HepG2 (cell line): ENCODE measurements at regions of chr7 and their contacts with region 1.

Region 1: GRCh38 chr7:73342645-73343044 is 14.7 kb downstream of the FKBP6 start:
- DNase-seq: peak; percentile 73
- ATAC-seq: peak; percentile 79
- H3K4me3 ChIP-seq: peak overlapping the region; percentile 11 to 67 (median 43); a peak in 4 of 6 replicates
- H3K27ac ChIP-seq: no peak overlapping the region
- H3K4me1 ChIP-seq: peaks cover 62% of the 10 kb centered on the region
- H3K27me3 ChIP-seq: peaks cover 0 to 5% of the 10 kb centered on the region in 2 experiments; a peak in 1 of 5 replicates
- CTCF ChIP-seq: peak; percentile 90
- EP300 ChIP-seq: no peak
- POLR2A ChIP-seq: no peak
- RAD21 ChIP-seq: peak; percentile 69

Region 2: GRCh38 chr7:73329861-73330581 is 12.6 kb before region 1 on chr7:
- CTCF ChIA-PET with region 1: interaction called, 3 read pairs
- POLR2A ChIA-PET with region 1: interaction called, 7 read pairs
- in situ Hi-C with region 1: no loop called
- intact Hi-C with region 1: loop called (anchors 2 kb)
- DNase-seq: no peak
- ATAC-seq: peak; percentile 30
- H3K4me3 ChIP-seq: peak overlapping the region in 2 of 3 experiments; percentile 5 to 29; a peak in 3 of 6 replicates
- H3K27ac ChIP-seq: no peak overlapping the region
- H3K4me1 ChIP-seq: peaks cover 53% of the 10 kb centered on the region
- H3K27me3 ChIP-seq: peaks cover 2 to 23% of the 10 kb centered on the region in 2 experiments; a peak in 2 of 5 replicates
- CTCF ChIP-seq: no peak
- EP300 ChIP-seq: no peak
- POLR2A ChIP-seq: no peak
- RAD21 ChIP-seq: no peak

Region 3: GRCh38 chr7:73358590-73359275 is 16.1 kb after region 1 on chr7:
- CTCF ChIA-PET with region 1: no interaction called
- POLR2A ChIA-PET with region 1: interaction called, 28 read pairs
- in situ Hi-C with region 1: no loop called
- intact Hi-C with region 1: loop called (anchors 2 kb)
- DNase-seq: no peak
- ATAC-seq: peak; percentile 28
- H3K4me3 ChIP-seq: peak overlapping the region in 2 of 3 experiments; percentile 44 to 63; a peak in 4 of 6 replicates
- H3K27ac ChIP-seq: peak overlapping the region; percentile 78
- H3K4me1 ChIP-seq: peaks cover 73% of the 10 kb centered on the region
- H3K27me3 ChIP-seq: peaks cover 8 to 26% of the 10 kb centered on the region in 2 experiments
- CTCF ChIP-seq: no peak
- EP300 ChIP-seq: no peak
- POLR2A ChIP-seq: no peak
- RAD21 ChIP-seq: no peak

Region 4: GRCh38 chr7:73366127-73366526 is 23.5 kb after region 1 on chr7:
- CTCF ChIA-PET with region 1: no interaction called
- POLR2A ChIA-PET with region 1: interaction called, 3 read pairs
- in situ Hi-C with region 1: no loop called
- intact Hi-C with region 1: loop called (anchors 1 kb)
- DNase-seq: no peak
- ATAC-seq: no peak
- H3K4me3 ChIP-seq: no peak overlapping the region
- H3K27ac ChIP-seq: no peak overlapping the region
- H3K4me1 ChIP-seq: peaks cover 58% of the 10 kb centered on the region
- H3K27me3 ChIP-seq: peaks cover 10 to 34% of the 10 kb centered on the region in 2 experiments
- CTCF ChIP-seq: no peak
- EP300 ChIP-seq: no peak
- POLR2A ChIP-seq: no peak
- RAD21 ChIP-seq: no peak

Region 5: DNA sequence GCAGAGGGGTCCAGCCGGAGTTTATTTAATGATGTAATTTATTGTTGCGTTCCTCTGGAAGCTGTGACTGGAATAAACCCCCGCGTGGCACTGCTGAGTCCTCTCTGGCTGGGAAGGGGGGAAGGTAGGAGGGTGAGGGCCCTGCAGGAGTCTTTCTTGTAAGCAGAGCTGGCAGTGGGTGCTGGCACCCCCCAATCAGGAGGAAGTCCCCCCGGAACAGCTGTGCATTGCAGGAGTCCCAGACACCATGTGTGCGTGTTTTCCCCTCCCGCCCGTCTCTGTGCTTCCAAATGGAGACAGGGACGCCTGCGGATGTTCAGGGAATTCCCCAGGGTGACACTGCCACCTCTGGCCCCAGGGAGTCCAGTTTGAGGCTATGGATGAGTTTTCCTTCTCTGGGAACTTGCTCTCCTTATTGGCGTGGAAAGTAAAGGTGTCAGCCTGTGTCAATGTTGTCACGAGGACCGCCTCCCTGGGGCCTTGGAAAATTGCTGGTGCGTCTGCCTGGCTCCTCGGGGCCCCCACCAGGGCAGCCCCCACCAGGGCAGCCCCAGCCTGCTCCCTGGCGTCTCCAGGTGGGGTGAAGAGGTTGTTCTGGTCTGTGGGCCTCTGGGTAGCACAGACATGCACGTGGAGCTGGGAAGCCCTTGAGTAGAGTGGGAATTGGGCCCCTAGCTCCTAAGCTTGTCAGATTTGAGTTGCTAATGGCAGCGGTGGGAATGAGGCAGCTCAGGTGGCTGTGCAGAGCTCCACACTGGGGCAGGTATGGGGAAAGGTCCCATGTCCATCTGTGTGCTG is 93.6 kb after region 1 on chr7:
- CTCF ChIA-PET with region 1: no interaction called
- POLR2A ChIA-PET with region 1: interaction called, 3 read pairs
- in situ Hi-C with region 1: loop called (anchors 5 kb)
- intact Hi-C with region 1: loop called (anchors 1 kb)
- DNase-seq: peak; percentile 54
- ATAC-seq: peak; percentile 71
- H3K4me3 ChIP-seq: peak overlapping the region in 2 of 3 experiments; percentile 5 to 49; a peak in 1 of 6 replicates
- H3K27ac ChIP-seq: no peak overlapping the region
- H3K4me1 ChIP-seq: peaks cover 32% of the 10 kb centered on the region
- H3K27me3 ChIP-seq: peaks cover 0 to 4% of the 10 kb centered on the region in 2 experiments; a peak in 1 of 5 replicates
- CTCF ChIP-seq: peak; percentile 70
- EP300 ChIP-seq: no peak
- POLR2A ChIP-seq: no peak
- RAD21 ChIP-seq: peak; percentile 56

Region 6: DNA sequence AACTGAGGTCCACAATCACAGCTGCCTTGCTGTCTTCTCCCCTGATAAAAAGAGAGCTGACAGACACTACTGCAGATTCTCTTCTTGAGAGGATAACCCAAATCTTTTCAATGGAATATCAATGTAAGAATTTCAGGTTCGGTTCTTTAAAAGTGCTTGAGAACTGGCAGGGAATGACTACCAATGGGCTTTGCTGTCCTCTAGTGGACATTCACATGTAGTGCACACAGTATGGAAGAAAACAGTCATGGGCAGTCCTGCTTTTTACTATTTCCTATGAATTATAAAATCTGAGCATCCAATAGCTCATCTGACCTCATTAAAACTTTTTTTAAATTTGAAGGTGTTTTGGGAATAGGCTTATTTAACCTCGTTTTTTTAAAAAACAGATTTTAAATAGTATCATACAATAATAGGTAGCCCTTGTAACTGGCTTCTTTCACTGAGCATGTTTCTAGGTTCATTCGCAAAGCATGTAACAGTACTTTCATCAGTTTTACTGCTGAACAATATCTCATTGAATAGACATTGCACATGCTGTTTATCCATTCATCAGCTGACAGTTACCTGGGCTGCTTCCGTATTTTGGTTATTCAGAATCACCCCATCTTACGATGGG is 109.2 kb after region 1 on chr7:
- CTCF ChIA-PET with region 1: interaction called, 8 read pairs
- POLR2A ChIA-PET with region 1: no interaction called
- in situ Hi-C with region 1: no loop called
- intact Hi-C with region 1: loop called (anchors 1 kb)
- DNase-seq: peak; percentile 57
- ATAC-seq: peak; percentile 51
- H3K4me3 ChIP-seq: no peak overlapping the region
- H3K27ac ChIP-seq: no peak overlapping the region
- H3K4me1 ChIP-seq: peaks cover 28% of the 10 kb centered on the region
- H3K27me3 ChIP-seq: no peaks in the 10 kb centered on the region
- CTCF ChIP-seq: peak; percentile 86
- EP300 ChIP-seq: no peak
- POLR2A ChIP-seq: no peak
- RAD21 ChIP-seq: peak; percentile 88

Region 7: DNA sequence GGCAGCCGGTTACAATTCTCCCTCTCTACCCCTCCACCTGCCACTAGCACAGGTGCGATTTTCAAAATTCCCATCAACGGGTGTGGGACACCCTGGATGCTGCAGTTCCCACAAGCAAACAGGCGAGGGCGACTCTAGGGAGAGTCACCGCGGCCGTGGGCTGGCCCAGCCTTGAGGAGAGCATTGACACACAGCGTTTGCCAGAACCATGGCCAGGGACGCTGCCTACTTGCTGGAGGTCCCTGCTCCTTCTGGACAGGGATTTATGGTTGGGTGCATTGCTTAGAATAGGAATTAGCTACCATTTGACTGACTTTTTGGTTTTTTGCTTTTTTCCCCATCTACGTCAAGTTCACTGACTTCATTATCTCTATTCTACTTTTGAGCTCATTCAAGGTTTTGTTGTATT is 469.1 kb after region 1 on chr7:
- CTCF ChIA-PET with region 1: no interaction called
- POLR2A ChIA-PET with region 1: no interaction called
- in situ Hi-C with region 1: no loop called
- intact Hi-C with region 1: no loop called
- DNase-seq: peak; percentile 54
- ATAC-seq: peak; percentile 98
- H3K4me3 ChIP-seq: no peak overlapping the region
- H3K27ac ChIP-seq: no peak overlapping the region
- H3K4me1 ChIP-seq: no peaks in the 10 kb centered on the region
- H3K27me3 ChIP-seq: peaks cover 0 to 1% of the 10 kb centered on the region in 2 experiments; a peak in 2 of 5 replicates
- CTCF ChIP-seq: peak; percentile 92
- EP300 ChIP-seq: no peak
- POLR2A ChIP-seq: no peak
- RAD21 ChIP-seq: peak; percentile 80

Region 8: GRCh38 chr7:73986158-73986631 is 643.5 kb after region 1 on chr7:
- CTCF ChIA-PET with region 1: no interaction called
- POLR2A ChIA-PET with region 1: no interaction called
- in situ Hi-C with region 1: no loop called
- intact Hi-C with region 1: no loop called
- DNase-seq: no peak
- ATAC-seq: no peak
- H3K4me3 ChIP-seq: no peak overlapping the region
- H3K27ac ChIP-seq: no peak overlapping the region
- H3K4me1 ChIP-seq: no peaks in the 10 kb centered on the region
- H3K27me3 ChIP-seq: peaks cover 0 to 18% of the 10 kb centered on the region in 2 experiments; a peak in 2 of 5 replicates
- CTCF ChIP-seq: no peak
- EP300 ChIP-seq: no peak
- POLR2A ChIP-seq: no peak
- RAD21 ChIP-seq: no peak